Activated B cell treated with CpG ODN at 0.5 μM for 24 hours (primary cell): ENCODE measurements at regions of chr16 and their contacts with region 1.

Region 1: GRCh38 chr16:17334096-17334495 is 136.7 kb downstream of the XYLT1 start:
- DNase-seq: no peak
- ATAC-seq: no peak
- H3K4me3 Mint-ChIP-seq: no peak overlapping the region
- H3K27ac Mint-ChIP-seq: no peak overlapping the region
- H3K4me1 Mint-ChIP-seq: peaks cover 14% of the 10 kb centered on the region
- H3K27me3 Mint-ChIP-seq: no peaks in the 10 kb centered on the region
- CTCF ChIP-seq: no peak

Region 2: GRCh38 chr16:17312094-17312710 is 21.9 kb before region 1 on chr16:
- CTCF ChIA-PET with region 1: no interaction called
- POLR2A ChIA-PET with region 1: no interaction called
- intact Hi-C with region 1: loop called (anchors 2 kb)
- DNase-seq: peak; percentile 38
- ATAC-seq: peak; percentile 93
- H3K4me3 Mint-ChIP-seq: peak overlapping the region; percentile 71
- H3K27ac Mint-ChIP-seq: peak overlapping the region; percentile 92
- H3K4me1 Mint-ChIP-seq: peaks cover 64% of the 10 kb centered on the region
- H3K27me3 Mint-ChIP-seq: no peaks in the 10 kb centered on the region
- CTCF ChIP-seq: no peak